ENCODE measurements at regions of chrX and their contacts with region 1.

Region 1: DNA sequence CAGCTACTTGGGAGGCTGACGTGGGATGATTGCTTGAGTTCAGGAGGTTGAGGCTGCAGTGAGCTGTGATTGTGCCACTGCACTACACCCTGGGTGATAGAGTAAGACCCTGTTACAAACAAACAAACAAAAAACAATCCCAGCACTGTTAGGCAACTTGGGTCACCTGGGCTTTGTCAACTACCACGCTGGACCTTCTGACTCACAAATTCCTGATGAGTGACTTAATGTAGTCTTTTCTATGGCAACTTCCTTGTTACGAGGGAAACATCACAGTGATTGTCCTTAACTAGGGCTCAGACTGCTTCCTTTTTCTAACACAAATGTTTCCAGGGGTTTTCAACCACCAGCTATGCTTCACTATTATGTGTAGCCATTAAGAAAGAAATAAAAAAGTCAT is 128.8 kb upstream of the GPC4 start:
- DNase-seq: peak; percentile 70 to 97
- H3K4me3 ChIP-seq: peak overlapping the region; percentile 27; the same call in 1 of the 2 replicates
- H3K27ac ChIP-seq: peak overlapping the region; percentile 98
- H3K4me1 ChIP-seq: peaks cover 31% of the 10 kb centered on the region
- H3K27me3 ChIP-seq: no peaks in the 10 kb centered on the region
- CTCF ChIP-seq: no peak

Region 2: DNA sequence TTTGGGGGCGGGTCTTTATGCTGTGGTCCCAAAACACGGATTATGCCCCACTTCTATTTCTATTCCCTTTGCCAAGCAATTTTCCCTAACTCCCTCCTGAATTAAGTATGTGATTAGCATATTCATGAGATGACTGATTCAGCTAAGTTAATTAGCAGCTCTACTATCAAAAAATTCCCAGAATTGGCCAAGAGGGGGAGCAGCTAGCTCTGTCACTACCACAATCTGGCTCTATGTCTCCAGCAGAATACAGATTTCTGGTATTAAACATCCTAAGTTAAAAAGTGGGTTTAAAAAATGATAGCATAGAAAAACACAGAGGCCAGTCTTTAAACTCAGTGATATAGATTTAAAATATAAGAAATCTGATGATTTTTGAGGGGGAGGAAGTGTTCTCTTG is 209.1 kb before region 1 on chrX:
- CTCF ChIA-PET with region 1: no interaction called
- POLR2A ChIA-PET with region 1: no interaction called
- intact Hi-C with region 1: loop called (anchors 10 kb)
- DNase-seq: peak in 1 of 2 experiments; percentile 22
- H3K4me3 ChIP-seq: no peak overlapping the region
- H3K27ac ChIP-seq: no peak overlapping the region
- H3K4me1 ChIP-seq: no peaks in the 10 kb centered on the region
- H3K27me3 ChIP-seq: no peaks in the 10 kb centered on the region
- CTCF ChIP-seq: peak; percentile 83

Region 3: GRCh38 chrX:133444951-133445831 is 98.9 kb before region 1 on chrX:
- CTCF ChIA-PET with region 1: no interaction called
- POLR2A ChIA-PET with region 1: no interaction called
- intact Hi-C with region 1: loop called (anchors 1 kb)
- DNase-seq: peak; percentile 41 to 43
- H3K4me3 ChIP-seq: peak overlapping the region; percentile 54; the same call in 1 of the 2 replicates
- H3K27ac ChIP-seq: no peak overlapping the region
- H3K4me1 ChIP-seq: no peaks in the 10 kb centered on the region
- H3K27me3 ChIP-seq: no peaks in the 10 kb centered on the region
- CTCF ChIP-seq: no peak

Region 4: GRCh38 chrX:133586443-133586842 is 42.3 kb after region 1 on chrX:
- CTCF ChIA-PET with region 1: interaction called, 3 read pairs
- POLR2A ChIA-PET with region 1: no interaction called
- intact Hi-C with region 1: loop called (anchors 2 kb)
- DNase-seq: peak; percentile 11 to 46
- H3K4me3 ChIP-seq: no peak overlapping the region
- H3K27ac ChIP-seq: no peak overlapping the region
- H3K4me1 ChIP-seq: peaks cover 9% of the 10 kb centered on the region; the same call in 1 of the 2 replicates
- H3K27me3 ChIP-seq: no peaks in the 10 kb centered on the region
- CTCF ChIP-seq: no peak

Region 5: DNA sequence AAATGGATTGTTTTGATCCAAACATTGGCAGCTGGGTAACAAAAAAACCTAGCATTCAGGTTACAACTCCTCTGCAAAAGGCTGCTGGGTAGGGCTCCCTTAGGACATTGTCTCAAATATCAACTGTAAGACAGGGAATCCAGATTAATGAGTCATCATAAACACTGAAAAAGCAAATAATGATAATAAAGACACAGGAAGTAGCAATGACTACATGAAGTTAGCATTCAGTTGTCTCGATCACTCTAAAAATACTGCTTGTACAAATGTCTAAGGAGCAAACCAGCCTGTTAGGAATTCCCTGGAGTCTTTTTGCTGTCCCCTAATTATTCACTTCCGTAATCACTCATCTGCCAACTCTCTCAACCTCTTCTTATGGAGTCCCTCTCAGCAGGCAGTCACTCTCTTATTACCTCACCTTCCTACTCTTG is 182.1 kb after region 1 on chrX:
- CTCF ChIA-PET with region 1: no interaction called
- POLR2A ChIA-PET with region 1: no interaction called
- intact Hi-C with region 1: loop called (anchors 1 kb)
- DNase-seq: peak; percentile 54 to 98
- H3K4me3 ChIP-seq: peak overlapping the region; percentile 36; the same call in 1 of the 2 replicates
- H3K27ac ChIP-seq: peak overlapping the region; percentile 90
- H3K4me1 ChIP-seq: peaks cover 20% of the 10 kb centered on the region
- H3K27me3 ChIP-seq: no peaks in the 10 kb centered on the region
- CTCF ChIP-seq: no peak